MCF 10A (cell line): ENCODE measurements at regions of chr3 and their contacts with region 1.

Region 1: GRCh38 chr3:141412087-141412935 is 44.0 kb downstream of the ZBTB38 start:
- DNase-seq: peak; percentile 89
- H3K4me3 Mint-ChIP-seq: peak overlapping the region; percentile 58
- H3K27ac Mint-ChIP-seq: peak overlapping the region; percentile 95
- H3K4me1 Mint-ChIP-seq: peaks cover 47% of the 10 kb centered on the region
- H3K27me3 Mint-ChIP-seq: no peaks in the 10 kb centered on the region
- CTCF ChIP-seq: no peak

Region 2: DNA sequence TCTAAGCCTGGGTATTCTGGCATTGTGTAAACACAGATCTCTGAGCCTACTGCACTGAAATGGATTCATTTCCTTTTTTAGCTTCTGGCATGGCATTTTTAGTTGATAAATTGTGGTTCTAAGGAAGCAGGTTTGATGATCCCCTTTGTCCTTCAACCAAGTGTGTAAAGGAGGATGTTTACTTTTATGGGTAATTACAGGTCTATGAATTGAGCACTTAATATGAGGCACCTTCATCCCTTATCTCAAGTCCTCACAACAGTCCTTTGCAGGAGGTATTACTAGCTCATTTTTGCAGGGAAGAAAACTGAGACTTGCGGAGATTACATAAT is 74.8 kb before region 1 on chr3:
- CTCF ChIA-PET with region 1: no interaction called
- POLR2A ChIA-PET with region 1: no interaction called
- intact Hi-C with region 1: no loop called
- DNase-seq: no peak
- H3K4me3 Mint-ChIP-seq: no peak overlapping the region
- H3K27ac Mint-ChIP-seq: no peak overlapping the region
- H3K4me1 Mint-ChIP-seq: peaks cover 4% of the 10 kb centered on the region
- H3K27me3 Mint-ChIP-seq: no peaks in the 10 kb centered on the region
- CTCF ChIP-seq: no peak

Region 3: GRCh38 chr3:141426404-141427034 is 14.2 kb after region 1 on chr3:
- CTCF ChIA-PET with region 1: interaction called, 6 read pairs
- POLR2A ChIA-PET with region 1: interaction called, 27 read pairs
- intact Hi-C with region 1: no loop called
- DNase-seq: peak; percentile 36
- H3K4me3 Mint-ChIP-seq: peak overlapping the region; percentile 9
- H3K27ac Mint-ChIP-seq: peak overlapping the region; percentile 55
- H3K4me1 Mint-ChIP-seq: peaks cover 9% of the 10 kb centered on the region
- H3K27me3 Mint-ChIP-seq: no peaks in the 10 kb centered on the region
- CTCF ChIP-seq: no peak

Region 4: GRCh38 chr3:141431411-141432378 is 19.4 kb after region 1 on chr3:
- CTCF ChIA-PET with region 1: interaction called, 7 read pairs
- POLR2A ChIA-PET with region 1: interaction called, 16 read pairs
- intact Hi-C with region 1: no loop called
- DNase-seq: no peak
- H3K4me3 Mint-ChIP-seq: no peak overlapping the region
- H3K27ac Mint-ChIP-seq: no peak overlapping the region
- H3K4me1 Mint-ChIP-seq: peaks cover 2% of the 10 kb centered on the region
- H3K27me3 Mint-ChIP-seq: no peaks in the 10 kb centered on the region
- CTCF ChIP-seq: no peak